OCI-LY7 (cell line): ENCODE measurements at regions of chr14 and their contacts with region 1.

Region 1: DNA sequence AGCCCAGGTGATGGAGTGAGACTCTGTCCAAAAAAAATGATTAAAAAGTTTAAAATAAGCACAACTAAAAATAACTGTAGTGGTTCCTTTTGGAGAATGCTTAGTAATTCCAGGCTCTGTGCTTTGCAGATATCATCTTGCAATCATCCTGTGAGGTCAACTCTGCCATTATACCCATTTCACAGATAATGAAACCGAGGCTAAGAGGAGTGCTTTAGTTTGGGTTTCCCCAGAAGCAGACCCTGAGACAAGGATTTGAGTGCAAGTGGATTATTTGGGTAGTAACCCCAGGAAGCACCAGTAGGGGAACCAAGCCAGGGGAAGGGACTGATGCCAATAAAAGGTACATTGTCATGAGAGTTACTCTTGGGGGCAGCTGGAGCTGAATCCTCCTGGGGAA is 44.7 kb downstream of the RIN3 start:
- DNase-seq: no peak
- H3K4me3 ChIP-seq: no peak overlapping the region
- H3K27ac ChIP-seq: no peak overlapping the region
- H3K4me1 ChIP-seq: peaks cover 18% of the 10 kb centered on the region
- CTCF ChIP-seq: no peak

Region 2: DNA sequence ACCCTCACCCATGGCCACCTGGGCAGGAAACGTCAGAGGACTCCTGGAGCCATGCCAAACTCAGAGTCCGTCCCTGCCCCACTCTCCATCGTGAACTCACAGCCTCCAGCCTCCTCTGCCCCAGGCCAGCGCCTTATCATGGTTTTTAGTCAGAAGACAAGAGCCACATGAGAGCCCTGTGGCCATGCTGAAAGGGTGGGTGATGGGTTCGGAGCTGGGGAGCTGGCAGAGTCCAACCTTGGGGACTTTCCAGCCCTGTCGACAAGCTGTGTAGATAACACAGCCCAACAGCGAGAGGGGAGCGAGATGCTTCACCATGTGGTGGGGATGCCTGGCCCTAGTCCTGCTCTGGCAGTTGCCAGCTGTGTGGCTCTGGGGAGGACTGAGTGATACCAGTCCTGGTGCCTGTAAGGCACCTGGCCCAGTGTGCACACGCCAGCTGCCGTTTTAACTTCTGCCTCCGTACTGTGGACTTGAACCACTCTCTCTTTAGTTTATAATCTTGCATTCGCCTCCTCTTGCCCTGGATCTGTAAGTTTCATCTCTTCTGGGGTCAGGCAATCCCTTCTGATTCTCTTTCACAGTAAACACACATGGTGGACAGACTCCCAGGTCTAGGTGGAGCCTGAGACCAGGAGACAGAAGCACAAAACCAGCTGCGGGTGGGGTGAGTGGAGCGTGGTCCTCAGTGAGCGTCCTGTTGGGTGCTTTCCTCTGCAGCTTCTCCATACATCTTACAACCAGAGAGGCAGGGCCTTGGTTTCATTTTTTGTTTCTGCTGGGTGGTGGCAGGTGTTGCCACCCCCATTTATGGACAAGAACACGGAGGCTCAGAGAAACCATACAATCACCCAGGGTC is 10.5 kb after region 1 on chr14:
- CTCF ChIA-PET with region 1: no interaction called
- POLR2A ChIA-PET with region 1: interaction called, 11 read pairs
- intact Hi-C with region 1: no loop called
- DNase-seq: no peak
- H3K4me3 ChIP-seq: no peak overlapping the region
- H3K27ac ChIP-seq: no peak overlapping the region
- H3K4me1 ChIP-seq: no peaks in the 10 kb centered on the region
- CTCF ChIP-seq: no peak